Activated CD8-positive, alpha-beta T cell treated with anti-CD3 and anti-CD28 coated beads for 36 hours (primary cell): ENCODE measurements at regions of chr3 and their contacts with region 1.

Region 1: DNA sequence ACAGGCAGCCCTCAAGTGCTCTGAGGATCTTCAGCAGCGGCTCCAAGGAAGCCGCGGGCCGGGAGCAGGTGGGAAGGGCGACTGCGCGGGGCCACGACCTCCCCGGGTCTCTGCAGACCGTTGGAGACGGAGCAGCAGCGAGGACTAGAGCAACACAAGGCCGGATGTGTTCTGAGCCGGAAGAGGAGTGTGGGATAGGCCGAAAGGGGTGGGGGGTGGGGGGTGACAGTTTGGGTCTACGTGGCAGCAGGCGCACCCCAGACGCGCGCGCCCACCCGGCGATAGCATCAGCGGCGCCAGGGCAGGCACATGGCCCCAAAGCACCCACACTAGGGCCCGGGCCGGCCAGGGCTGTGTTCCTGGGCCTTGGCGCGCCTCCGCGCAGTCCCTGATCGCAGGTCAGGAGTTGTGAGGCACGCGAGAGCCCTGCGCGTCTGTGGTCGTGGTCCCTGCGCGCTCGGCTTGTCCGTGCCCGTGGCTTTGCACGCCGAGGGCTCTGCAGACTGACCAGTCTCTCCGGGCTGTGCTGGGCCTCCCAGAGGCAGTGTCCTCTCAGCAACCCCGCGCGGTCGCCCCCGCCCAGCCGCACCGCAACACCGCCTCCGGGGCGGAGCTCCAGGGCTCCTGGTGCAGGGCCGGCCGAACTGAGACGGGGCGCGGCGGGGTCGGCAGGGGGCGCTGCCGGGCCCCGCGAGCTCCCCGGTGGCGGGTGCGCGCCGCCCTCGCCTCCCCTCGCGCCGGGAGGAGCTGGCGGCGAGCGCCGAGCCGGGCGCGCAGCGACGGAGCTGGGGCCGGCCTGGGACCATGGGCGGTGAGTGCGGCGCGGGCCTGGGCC is at the start of gene PXYLP1:
- DNase-seq: peak; percentile 94
- ATAC-seq: peak; percentile 91
- H3K4me3 Mint-ChIP-seq: peak within 1 kb of the TSS; percentile 99
- H3K27ac Mint-ChIP-seq: peak within 1 kb of the TSS; percentile 99
- H3K4me1 Mint-ChIP-seq: peaks cover 45% of the 10 kb centered on the region
- H3K27me3 Mint-ChIP-seq: no peaks in the 10 kb centered on the region
- CTCF ChIP-seq: peak; percentile 59
- total RNA-seq, gene PXYLP1: 14.9 to 17.2 TPM

Region 2: DNA sequence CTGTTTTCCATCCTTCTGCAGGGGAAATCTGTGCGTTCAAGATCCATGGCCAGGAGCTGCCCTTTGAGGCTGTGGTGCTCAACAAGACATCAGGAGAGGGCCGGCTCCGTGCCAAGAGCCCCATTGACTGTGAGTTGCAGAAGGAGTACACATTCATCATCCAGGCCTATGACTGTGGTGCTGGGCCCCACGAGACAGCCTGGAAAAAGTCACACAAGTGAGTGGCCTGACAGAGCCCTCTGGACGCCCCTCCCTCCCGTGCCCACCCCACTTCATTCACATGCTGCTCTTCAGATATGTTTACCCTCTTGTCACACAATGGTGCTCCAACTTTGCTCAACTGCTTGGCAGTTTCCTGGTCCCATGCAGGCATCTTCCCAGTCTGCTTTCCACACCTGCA is 827.7 kb before region 1 on chr3:
- CTCF ChIA-PET with region 1: no interaction called
- POLR2A ChIA-PET with region 1: no interaction called
- intact Hi-C with region 1: no loop called
- DNase-seq: no peak
- ATAC-seq: no peak
- H3K4me3 Mint-ChIP-seq: no peak overlapping the region
- H3K27ac Mint-ChIP-seq: no peak overlapping the region
- H3K4me1 Mint-ChIP-seq: no peaks in the 10 kb centered on the region
- H3K27me3 Mint-ChIP-seq: peaks cover 13% of the 10 kb centered on the region
- CTCF ChIP-seq: no peak

Region 3: DNA sequence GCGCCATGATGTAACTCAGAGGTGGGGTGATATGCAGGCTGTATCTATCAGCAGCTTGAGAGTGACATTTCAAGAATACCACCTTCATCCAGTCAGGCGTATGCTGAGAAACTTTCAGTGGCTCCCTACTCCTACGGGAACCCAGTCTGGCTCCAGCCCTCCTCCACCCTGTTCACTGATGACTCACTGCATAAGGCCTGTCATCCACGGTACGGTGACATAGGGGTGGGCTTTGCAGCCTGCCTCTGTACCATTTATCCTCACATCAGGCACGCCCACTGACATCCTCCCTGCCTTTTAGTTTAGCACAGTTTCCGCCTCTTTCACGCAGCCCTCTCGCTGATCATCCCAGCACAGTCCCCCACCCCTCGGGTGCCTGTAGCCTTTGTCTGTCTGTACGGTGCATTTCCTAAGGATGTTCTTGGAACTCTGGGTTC is 12.0 kb after region 1 on chr3:
- CTCF ChIA-PET with region 1: interaction called, 143 read pairs
- POLR2A ChIA-PET with region 1: interaction called, 43 read pairs
- intact Hi-C with region 1: no loop called
- DNase-seq: peak; percentile 93
- ATAC-seq: peak; percentile 99
- H3K4me3 Mint-ChIP-seq: peak overlapping the region; percentile 59
- H3K27ac Mint-ChIP-seq: peak overlapping the region; percentile 86
- H3K4me1 Mint-ChIP-seq: peaks cover 50% of the 10 kb centered on the region
- H3K27me3 Mint-ChIP-seq: no peaks in the 10 kb centered on the region
- CTCF ChIP-seq: no peak

Region 4: DNA sequence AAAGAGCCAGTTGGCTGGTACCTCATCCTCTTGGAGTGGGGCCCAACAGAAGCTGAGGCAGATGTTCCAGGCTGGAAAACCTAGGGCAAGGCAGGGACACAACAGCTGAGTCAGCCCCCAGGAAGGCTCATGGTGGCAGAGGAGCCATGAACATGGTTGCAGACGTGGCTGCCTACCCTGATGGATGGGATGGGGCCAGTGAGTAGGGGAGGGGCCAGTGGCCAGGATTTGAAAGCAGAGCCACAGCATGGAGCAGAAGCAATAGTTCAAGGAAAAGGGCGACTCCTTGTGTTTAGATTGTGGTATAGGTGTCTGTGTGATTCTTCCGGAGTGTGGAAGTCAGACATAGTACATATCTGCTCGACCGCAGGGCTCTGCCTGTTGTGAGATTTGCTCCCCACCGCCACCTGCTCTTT is 24.5 kb after region 1 on chr3:
- CTCF ChIA-PET with region 1: interaction called, 143 read pairs
- POLR2A ChIA-PET with region 1: interaction called, 5 read pairs
- intact Hi-C with region 1: no loop called
- DNase-seq: peak; percentile 70
- ATAC-seq: peak; percentile 93
- H3K4me3 Mint-ChIP-seq: no peak overlapping the region
- H3K27ac Mint-ChIP-seq: peak overlapping the region; percentile 47
- H3K4me1 Mint-ChIP-seq: peaks cover 49% of the 10 kb centered on the region
- H3K27me3 Mint-ChIP-seq: no peaks in the 10 kb centered on the region
- CTCF ChIP-seq: peak; percentile 49

Region 5: DNA sequence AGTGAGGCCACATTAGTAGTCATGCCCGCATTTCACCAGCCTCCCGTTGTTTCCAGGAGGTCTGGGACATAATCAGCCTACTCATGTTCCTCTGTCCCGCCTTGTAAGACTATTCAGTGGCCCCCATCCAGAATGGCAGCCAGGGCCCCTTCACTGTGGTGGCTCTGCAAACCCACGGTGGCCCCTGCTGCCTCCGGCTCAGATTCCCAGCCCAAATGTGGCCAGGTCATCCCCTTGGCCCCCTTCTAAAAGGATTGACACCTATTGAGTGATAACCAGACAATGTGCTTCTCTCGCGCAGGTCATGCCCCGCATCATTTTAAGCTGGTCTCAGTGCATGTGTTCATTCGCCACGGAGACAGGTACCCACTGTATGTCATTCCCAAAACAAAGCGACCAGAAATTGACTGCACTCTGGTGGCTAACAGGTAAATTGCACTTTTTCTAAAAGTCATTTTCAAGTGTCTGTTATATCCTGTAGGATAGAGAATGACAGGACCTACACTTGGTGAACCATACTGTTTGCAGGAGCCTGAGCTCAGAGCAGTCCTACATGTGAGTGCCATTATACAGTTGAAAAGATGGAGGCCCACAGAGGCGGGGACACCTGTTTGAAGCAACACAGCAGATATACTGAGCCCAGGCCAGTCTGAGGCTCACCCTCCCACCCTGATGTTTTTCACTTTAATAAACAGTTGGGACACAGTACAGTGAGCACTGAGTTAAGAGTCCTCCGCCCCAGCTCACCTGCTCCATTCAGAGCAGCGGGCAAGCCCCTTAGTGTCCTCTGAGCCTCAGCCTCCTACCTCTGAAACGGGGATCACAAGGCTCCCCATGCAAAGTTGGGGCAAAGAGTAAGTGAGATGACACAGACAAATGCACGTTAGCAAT is 48.0 kb after region 1 on chr3:
- CTCF ChIA-PET with region 1: interaction called, 82 read pairs
- POLR2A ChIA-PET with region 1: interaction called, 3 read pairs
- intact Hi-C with region 1: loop called (anchors 5 kb)
- DNase-seq: no peak
- ATAC-seq: peak; percentile 61
- H3K4me3 Mint-ChIP-seq: no peak overlapping the region
- H3K27ac Mint-ChIP-seq: no peak overlapping the region
- H3K4me1 Mint-ChIP-seq: peaks cover 21% of the 10 kb centered on the region
- H3K27me3 Mint-ChIP-seq: no peaks in the 10 kb centered on the region
- CTCF ChIP-seq: peak; percentile 75

Region 6: DNA sequence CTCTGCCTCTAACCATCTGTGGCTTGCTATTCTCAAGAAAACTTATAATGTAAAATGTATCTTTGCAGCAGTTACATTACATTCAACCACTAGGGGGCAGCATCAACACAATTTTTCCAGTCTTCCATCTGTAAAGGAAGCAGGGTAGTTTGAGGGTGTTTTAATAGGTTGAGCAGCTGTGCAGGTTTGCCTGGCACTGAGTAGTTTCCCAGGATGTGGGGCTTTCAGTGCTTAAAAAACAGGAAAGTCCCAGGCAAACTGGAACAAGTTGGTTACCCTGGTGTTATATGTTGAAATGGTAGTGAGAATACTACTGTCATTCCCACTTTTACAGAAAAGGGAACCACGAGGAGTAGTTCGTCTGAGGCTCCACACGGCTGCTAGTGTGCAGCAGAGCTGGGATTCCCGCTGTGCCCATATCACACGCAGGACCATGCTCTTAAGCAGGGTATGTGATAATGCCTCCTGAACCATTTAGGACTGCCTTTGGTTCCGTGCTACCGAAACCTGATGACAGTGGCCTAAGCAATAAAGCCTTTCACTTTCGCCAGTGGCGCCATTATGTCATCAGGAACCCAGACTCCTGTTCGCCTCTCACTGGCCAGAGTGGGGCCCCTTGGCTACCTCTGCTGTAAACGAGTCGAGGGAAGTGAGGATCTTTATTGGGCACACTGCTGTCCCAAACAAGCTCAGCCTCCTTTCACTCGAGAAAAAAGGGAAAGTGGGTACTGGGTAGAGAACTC is 72.3 kb after region 1 on chr3:
- CTCF ChIA-PET with region 1: interaction called, 69 read pairs
- POLR2A ChIA-PET with region 1: interaction called, 3 read pairs
- intact Hi-C with region 1: no loop called
- DNase-seq: peak; percentile 74
- ATAC-seq: peak; percentile 35
- H3K4me3 Mint-ChIP-seq: no peak overlapping the region
- H3K27ac Mint-ChIP-seq: no peak overlapping the region
- H3K4me1 Mint-ChIP-seq: peaks cover 47% of the 10 kb centered on the region
- H3K27me3 Mint-ChIP-seq: no peaks in the 10 kb centered on the region
- CTCF ChIP-seq: peak; percentile 91

Region 7: GRCh38 chr3:142436951-142437585 is 1205.8 kb after region 1 on chr3:
- CTCF ChIA-PET with region 1: no interaction called
- POLR2A ChIA-PET with region 1: no interaction called
- intact Hi-C with region 1: no loop called
- DNase-seq: no peak
- ATAC-seq: no peak
- H3K4me3 Mint-ChIP-seq: no peak overlapping the region
- H3K27ac Mint-ChIP-seq: no peak overlapping the region
- H3K4me1 Mint-ChIP-seq: peaks cover 36% of the 10 kb centered on the region
- H3K27me3 Mint-ChIP-seq: no peaks in the 10 kb centered on the region
- CTCF ChIP-seq: no peak